ENCODE measurements at regions of chr6 and their contacts with region 1.

Region 1: GRCh38 chr6:110981202-110981600 is 637 bp upstream of the RPF2 start:
- DNase-seq: no peak
- ATAC-seq: 0 out of 2 replicates have a peak, but pooled peaks have one; percentile 1
- H3K4me3 ChIP-seq: peak overlapping the region; percentile 73 to 81
- H3K27ac ChIP-seq: peak overlapping the region; percentile 96
- H3K4me1 ChIP-seq: peaks cover 4% of the 10 kb centered on the region; the same call in 1 of the 2 replicates
- H3K27me3 ChIP-seq: no peaks in the 10 kb centered on the region
- CTCF ChIP-seq: no peak

Region 2: GRCh38 chr6:111096246-111096645 is 115.0 kb after region 1 on chr6:
- CTCF ChIA-PET with region 1: no interaction called
- POLR2A ChIA-PET with region 1: no interaction called
- in situ Hi-C with region 1: loop called (anchors 10 kb)
- intact Hi-C with region 1: no loop called
- DNase-seq: no peak
- ATAC-seq: no peak
- H3K4me3 ChIP-seq: no peak overlapping the region
- H3K27ac ChIP-seq: no peak overlapping the region
- H3K4me1 ChIP-seq: no peaks in the 10 kb centered on the region
- H3K27me3 ChIP-seq: peaks cover 22% of the 10 kb centered on the region
- CTCF ChIP-seq: no peak

Measured in Panc1 (cell line).